ENCODE measurements at regions of chr5 and their contacts with region 1.

Region 1: DNA sequence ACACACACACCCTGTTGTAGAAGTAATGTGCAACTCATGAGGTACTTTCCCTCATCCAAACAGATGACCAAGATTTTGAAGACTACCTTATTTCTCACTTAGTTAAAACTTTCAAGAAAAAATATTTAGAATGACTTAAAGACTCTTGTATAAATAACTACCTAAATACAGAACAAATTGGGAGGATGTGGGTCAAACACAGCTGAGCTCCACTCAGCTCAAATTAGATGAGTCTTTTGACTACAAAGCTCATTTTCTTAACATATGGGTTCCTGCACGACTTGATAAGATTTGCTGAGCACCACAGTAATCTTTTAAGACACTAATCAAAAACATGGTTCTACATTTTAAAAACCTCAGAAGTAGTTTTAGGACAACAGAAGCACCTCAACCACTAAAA is 8.9 kb downstream of the MTX3 start:
- DNase-seq: no peak
- ATAC-seq: no peak
- H3K4me3 Mint-ChIP-seq: no peak overlapping the region
- H3K27ac Mint-ChIP-seq: peak overlapping the region; percentile 73
- H3K4me1 Mint-ChIP-seq: peaks cover 49% of the 10 kb centered on the region
- H3K27me3 Mint-ChIP-seq: no peaks in the 10 kb centered on the region

Region 2: DNA sequence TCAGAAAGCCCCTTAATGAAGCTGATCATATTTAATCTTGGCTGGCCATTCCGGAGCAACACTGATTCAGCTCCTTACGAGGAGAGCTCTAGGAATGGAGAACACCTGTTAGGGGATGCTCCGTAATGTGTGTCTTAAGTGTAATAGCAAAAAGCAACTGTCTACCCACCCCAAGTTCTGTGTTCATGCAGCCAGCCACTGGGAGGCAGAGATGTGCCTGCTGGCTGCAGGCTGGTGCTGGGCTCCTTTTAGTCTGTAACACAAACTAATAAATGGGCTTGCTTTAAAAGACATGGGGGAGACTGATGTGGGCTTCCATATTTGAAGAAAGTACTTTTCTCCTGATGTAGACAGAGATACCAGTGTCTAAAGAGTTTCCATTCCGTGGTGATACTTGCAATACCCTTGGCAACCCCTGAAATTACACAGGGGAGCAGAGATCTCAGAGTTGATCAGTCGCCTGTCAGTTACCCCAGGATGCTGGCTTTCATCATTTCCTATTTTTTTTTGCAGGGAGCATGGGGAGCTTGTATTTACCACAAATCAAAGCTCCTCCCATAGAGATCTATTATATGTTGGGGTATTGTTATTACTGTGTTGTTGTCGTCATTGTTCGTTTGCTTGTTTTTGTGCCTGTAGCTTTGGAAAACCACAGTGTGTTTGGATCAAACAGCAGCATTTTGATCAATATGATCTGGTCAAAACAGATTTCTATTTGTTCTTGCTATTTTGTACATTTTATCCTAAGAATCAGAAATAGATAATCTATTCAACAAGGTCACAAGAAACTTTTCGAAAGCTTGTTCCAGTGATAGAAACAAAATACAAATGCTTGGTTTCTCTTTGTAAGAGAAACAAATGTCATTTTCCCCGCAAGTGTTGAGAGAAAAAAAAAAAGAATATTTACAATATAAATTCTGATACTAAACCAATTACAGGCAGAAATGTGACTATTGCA is 56.9 kb before region 1 on chr5:
- CTCF ChIA-PET with region 1: interaction called, 3 read pairs
- POLR2A ChIA-PET with region 1: no interaction called
- intact Hi-C with region 1: loop called in 1 of 2 experiments (anchors 5 kb)
- DNase-seq: peak; percentile 48
- ATAC-seq: peak; percentile 73
- H3K4me3 Mint-ChIP-seq: no peak overlapping the region
- H3K27ac Mint-ChIP-seq: no peak overlapping the region
- H3K4me1 Mint-ChIP-seq: no peaks in the 10 kb centered on the region
- H3K27me3 Mint-ChIP-seq: peaks cover 2% of the 10 kb centered on the region

Region 3: GRCh38 chr5:79955941-79956670 is 26.0 kb before region 1 on chr5:
- CTCF ChIA-PET with region 1: no interaction called
- POLR2A ChIA-PET with region 1: no interaction called
- intact Hi-C with region 1: no loop called
- DNase-seq: no peak
- ATAC-seq: no peak
- H3K4me3 Mint-ChIP-seq: no peak overlapping the region
- H3K27ac Mint-ChIP-seq: no peak overlapping the region
- H3K4me1 Mint-ChIP-seq: no peaks in the 10 kb centered on the region
- H3K27me3 Mint-ChIP-seq: peaks cover 3% of the 10 kb centered on the region